K562 (cell line): ENCODE measurements at regions of chr2 and their contacts with region 1.

Region 1: DNA sequence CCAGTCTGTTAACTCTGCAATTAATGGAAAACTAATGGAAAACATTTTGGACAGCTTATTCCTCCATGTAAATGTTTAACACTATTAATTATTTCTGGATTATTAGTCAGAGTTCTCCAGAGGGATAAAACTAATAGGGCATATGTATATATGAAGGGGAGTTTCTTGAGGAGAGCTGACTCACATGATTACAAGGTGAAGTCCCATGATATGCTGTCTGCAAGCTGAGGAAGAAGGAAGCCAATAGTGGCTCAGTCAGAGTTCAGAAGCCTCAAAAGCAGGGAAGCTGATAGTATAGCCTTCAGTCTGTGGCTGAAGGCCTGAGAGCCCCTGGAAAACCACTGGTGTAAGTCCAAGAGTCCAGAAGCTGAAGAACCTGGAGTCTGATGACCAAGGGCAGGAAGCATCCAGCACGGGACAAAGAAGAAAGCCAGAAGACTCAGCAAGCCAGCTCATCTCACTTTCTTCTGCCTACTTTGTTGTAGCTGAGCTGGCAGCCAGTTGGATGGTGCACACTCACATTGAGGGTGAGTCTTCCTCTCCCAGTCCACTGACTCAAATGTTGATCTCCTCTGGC is 136.0 kb downstream of the PTH2R start:
- DNase-seq: peak in 2 of 4 experiments; percentile 24 to 80
- ATAC-seq: peak; percentile 83
- H3K4me3 ChIP-seq: peak overlapping the region; percentile 39
- H3K27ac ChIP-seq: peak overlapping the region; percentile 82
- H3K4me1 ChIP-seq: peaks cover 0 to 18% of the 10 kb centered on the region in 2 experiments; a peak in 4 of 5 replicates
- H3K27me3 ChIP-seq: no peaks in the 10 kb centered on the region
- CTCF ChIP-seq: no peak
- EP300 ChIP-seq: no peak
- POLR2A ChIP-seq: peak; percentile 83
- RAD21 ChIP-seq: no peak

Region 2: DNA sequence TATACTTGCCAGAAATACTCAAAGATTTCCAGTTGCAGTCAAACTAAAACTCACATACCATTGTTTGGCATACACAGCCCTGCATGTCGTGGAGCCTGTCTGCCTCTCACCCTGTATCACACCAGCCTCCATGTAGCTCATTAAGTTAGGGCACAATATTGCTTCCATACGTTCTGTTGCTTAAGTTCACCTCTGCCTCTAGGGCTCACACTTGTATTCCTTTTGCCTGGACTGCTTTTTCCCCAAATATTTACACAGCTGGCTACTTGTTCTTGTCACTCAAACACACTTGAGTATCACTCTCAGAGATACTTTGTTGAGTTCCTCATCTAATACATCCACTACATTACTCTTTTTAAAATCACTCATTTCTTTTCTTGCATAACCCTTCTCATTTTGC is 52.9 kb before region 1 on chr2:
- CTCF ChIA-PET with region 1: no interaction called
- POLR2A ChIA-PET with region 1: interaction called, 6 read pairs
- in situ Hi-C with region 1: no loop called
- intact Hi-C with region 1: loop called (anchors 1 kb)
- DNase-seq: peak; percentile 9 to 38 (median 10)
- ATAC-seq: peak; percentile 75
- H3K4me3 ChIP-seq: no peak overlapping the region
- H3K27ac ChIP-seq: peak overlapping the region; percentile 72
- H3K4me1 ChIP-seq: peaks cover 11 to 30% of the 10 kb centered on the region in 2 experiments; a peak in 3 of 5 replicates
- H3K27me3 ChIP-seq: no peaks in the 10 kb centered on the region
- CTCF ChIP-seq: peak in 1 of 3 experiments; percentile 8; a peak in 1 of 6 replicates
- EP300 ChIP-seq: no peak
- POLR2A ChIP-seq: no peak
- RAD21 ChIP-seq: peak in 1 of 2 experiments; percentile 44; a peak in 2 of 4 replicates

Region 3: DNA sequence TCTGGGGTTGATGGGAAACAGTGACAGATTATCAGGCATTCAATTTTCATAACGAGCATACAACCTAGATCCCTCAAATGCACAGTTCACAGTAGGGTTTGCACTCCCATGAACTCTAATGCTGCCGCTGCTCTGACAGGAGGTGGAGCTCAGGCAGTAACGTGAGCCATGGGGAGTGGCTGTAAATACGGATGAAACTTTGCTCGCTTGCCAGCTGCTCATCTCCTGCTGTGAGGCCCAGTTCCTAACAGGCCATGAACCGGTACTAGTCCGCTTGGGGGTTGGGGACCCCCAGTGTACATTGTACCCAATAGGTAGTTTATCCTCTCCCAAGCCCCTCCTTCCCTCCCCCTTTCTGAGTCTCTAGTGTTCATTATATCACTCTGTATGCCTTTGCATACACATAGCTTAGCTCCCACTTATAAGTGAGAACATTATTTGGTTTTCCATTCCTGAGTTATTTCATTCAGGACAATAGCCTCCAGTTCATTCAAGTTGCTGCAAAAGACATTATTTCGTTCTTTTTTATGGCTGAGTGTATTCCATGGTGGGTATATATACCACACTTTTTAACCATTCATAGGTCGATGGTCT is 41.2 kb before region 1 on chr2:
- CTCF ChIA-PET with region 1: no interaction called
- POLR2A ChIA-PET with region 1: interaction called, 4 read pairs
- in situ Hi-C with region 1: no loop called
- intact Hi-C with region 1: loop called (anchors 1 kb)
- DNase-seq: peak in 2 of 4 experiments; percentile 40 to 85
- ATAC-seq: peak; percentile 98
- H3K4me3 ChIP-seq: peak overlapping the region; percentile 1; the same call in 1 of the 2 replicates
- H3K27ac ChIP-seq: peak overlapping the region; percentile 77
- H3K4me1 ChIP-seq: peaks cover 0 to 11% of the 10 kb centered on the region in 2 experiments; a peak in 2 of 5 replicates
- H3K27me3 ChIP-seq: no peaks in the 10 kb centered on the region
- CTCF ChIP-seq: no peak
- EP300 ChIP-seq: no peak
- POLR2A ChIP-seq: 0 out of 2 replicates have a peak, but pooled peaks have one; percentile 38
- RAD21 ChIP-seq: no peak

Region 4: GRCh38 chr2:208570851-208571764 is 28.6 kb after region 1 on chr2:
- CTCF ChIA-PET with region 1: no interaction called
- POLR2A ChIA-PET with region 1: interaction called, 3 read pairs
- in situ Hi-C with region 1: no loop called
- intact Hi-C with region 1: loop called (anchors 1 kb)
- DNase-seq: peak; percentile 15 to 57 (median 28)
- ATAC-seq: peak; percentile 83
- H3K4me3 ChIP-seq: peak overlapping the region; percentile 10; the same call in 1 of the 2 replicates
- H3K27ac ChIP-seq: peak overlapping the region; percentile 76
- H3K4me1 ChIP-seq: peaks cover 17 to 36% of the 10 kb centered on the region in 2 experiments
- H3K27me3 ChIP-seq: no peaks in the 10 kb centered on the region
- CTCF ChIP-seq: peak; percentile 8 to 43 (median 22); a peak in 4 of 6 replicates
- EP300 ChIP-seq: no peak
- POLR2A ChIP-seq: no peak
- RAD21 ChIP-seq: peak in 1 of 2 experiments; percentile 1; a peak in 1 of 4 replicates

Region 5: DNA sequence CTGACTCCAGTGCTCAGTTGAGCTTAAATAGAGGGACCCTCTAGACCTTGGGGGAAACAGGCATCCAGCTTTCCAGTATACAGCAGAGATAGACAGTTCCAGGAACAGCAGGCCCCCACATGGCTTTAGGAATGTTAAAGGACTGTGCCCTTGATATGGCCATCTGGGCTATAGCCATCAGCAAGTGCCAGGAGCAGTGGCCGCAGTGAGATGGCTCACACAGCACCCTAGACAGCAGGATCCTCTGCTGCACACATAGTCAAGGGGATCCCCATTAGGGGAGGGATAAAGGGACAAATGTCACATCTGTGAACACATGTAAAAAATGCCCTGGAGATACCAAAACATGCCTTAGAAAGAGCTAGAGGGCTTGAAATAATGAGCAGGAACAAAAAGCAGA is 77.4 kb after region 1 on chr2:
- CTCF ChIA-PET with region 1: no interaction called
- POLR2A ChIA-PET with region 1: no interaction called
- in situ Hi-C with region 1: no loop called
- intact Hi-C with region 1: loop called (anchors 5 kb)
- DNase-seq: peak in 1 of 4 experiments; percentile 36
- ATAC-seq: peak; percentile 67
- H3K4me3 ChIP-seq: no peak overlapping the region
- H3K27ac ChIP-seq: peak overlapping the region; percentile 46; the same call in 2 of the 3 replicates
- H3K4me1 ChIP-seq: peaks cover 6 to 17% of the 10 kb centered on the region in 2 experiments; a peak in 4 of 5 replicates
- H3K27me3 ChIP-seq: no peaks in the 10 kb centered on the region
- CTCF ChIP-seq: no peak
- EP300 ChIP-seq: no peak
- POLR2A ChIP-seq: no peak
- RAD21 ChIP-seq: no peak